Mucosa of descending colon (tissue), 3 donors: ENCODE measurements at regions of chr15 and their contacts with region 1.

Region 1: GRCh38 chr15:88476635-88477060 is 9.1 kb downstream of the MRPS11 start:
- DNase-seq: peak in 1 of 3 donors; percentile 28
- ATAC-seq: peak; percentile 66
- H3K4me3 ChIP-seq: no peak overlapping the region
- H3K4me1 ChIP-seq: no peaks in the 10 kb centered on the region
- CTCF ChIP-seq: no peak

Region 2: DNA sequence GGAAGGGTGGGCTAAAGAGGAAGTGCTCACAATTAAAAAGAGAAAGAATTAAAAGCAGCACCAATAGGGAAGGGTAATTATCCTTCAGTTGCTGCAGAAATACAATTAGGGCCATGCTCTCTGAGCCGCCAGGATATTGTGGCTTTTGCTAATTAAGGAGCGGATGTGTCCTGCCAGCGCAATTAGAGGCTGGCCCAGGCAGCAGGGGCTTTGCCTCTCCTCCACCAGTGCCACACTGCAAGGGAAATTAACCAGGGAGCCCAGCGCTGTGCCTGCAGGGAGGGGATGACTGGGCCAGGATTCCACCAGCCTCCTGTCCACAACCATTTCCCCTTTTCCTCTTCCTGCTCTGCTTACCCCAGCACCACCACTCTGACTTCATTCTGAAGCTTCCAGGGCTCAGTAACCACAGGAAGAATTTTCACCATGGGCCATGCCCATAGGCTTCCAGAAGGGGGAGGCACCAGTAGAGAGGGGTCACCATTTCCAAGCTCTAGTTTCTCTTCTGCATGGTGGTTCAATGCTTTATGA is 134.1 kb after region 1 on chr15:
- intact Hi-C with region 1: loop called in 1 of 2 experiments (anchors 10 kb)
- DNase-seq: no peak
- ATAC-seq: no peak
- H3K4me3 ChIP-seq: no peak overlapping the region
- H3K4me1 ChIP-seq: peaks cover 6% of the 10 kb centered on the region
- CTCF ChIP-seq: no peak

Region 3: GRCh38 chr15:89034288-89034687 is 557.6 kb after region 1 on chr15:
- intact Hi-C with region 1: no loop called
- DNase-seq: no peak
- ATAC-seq: no peak
- H3K4me3 ChIP-seq: no peak overlapping the region
- H3K4me1 ChIP-seq: no peaks in the 10 kb centered on the region
- CTCF ChIP-seq: no peak